ENCODE measurements at regions of chr5 and their contacts with region 1.

Region 1: DNA sequence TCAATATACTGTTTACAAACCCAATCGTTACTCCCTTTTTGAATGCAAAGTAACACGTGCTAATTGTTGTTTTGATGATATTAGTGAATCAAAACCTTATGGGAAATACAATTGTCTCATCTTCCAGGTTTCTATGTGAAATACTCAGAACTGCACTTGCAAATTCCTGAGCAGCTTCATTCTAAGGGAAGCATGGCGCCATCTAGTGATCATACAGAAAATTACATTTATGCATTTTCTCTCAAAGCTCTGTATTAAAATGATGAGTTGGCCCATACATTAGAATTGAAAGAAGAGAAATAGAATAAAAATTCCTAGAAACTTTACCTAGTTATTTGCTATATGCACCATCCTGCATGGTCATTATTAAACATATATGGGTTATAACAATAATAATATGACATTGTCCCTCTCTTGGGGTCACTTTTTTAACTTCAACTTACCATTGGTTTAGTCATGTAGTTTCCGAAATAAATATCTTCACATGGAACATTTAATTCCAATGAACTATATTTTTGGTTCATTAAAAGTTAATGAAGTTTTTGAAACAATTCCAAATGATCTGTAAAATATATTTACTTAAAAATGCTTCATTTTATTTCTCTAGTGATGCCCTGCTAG is 220.0 kb downstream of the PDE4D start:
- DNase-seq: peak in 2 of 5 donors; percentile 62 to 67
- H3K4me3 ChIP-seq: no peak overlapping the region
- H3K27ac ChIP-seq: no peak overlapping the region
- H3K4me1 ChIP-seq: no peaks in the 10 kb centered on the region
- H3K27me3 ChIP-seq: no peaks in the 10 kb centered on the region
- CTCF ChIP-seq: peak; percentile 67

Region 2: GRCh38 chr5:59188419-59189225 is 484.9 kb before region 1 on chr5:
- intact Hi-C with region 1: loop called (anchors 10 kb)
- DNase-seq: peak; percentile 70 to 88 (median 79)
- H3K4me3 ChIP-seq: peak overlapping the region in 1 of 3 donors; percentile 29
- H3K27ac ChIP-seq: no peak overlapping the region
- H3K4me1 ChIP-seq: no peaks in the 10 kb centered on the region
- H3K27me3 ChIP-seq: no peaks in the 10 kb centered on the region
- CTCF ChIP-seq: peak; percentile 79

Region 3: GRCh38 chr5:59624898-59625297 is 48.6 kb before region 1 on chr5:
- intact Hi-C with region 1: no loop called
- DNase-seq: no peak
- H3K4me3 ChIP-seq: no peak overlapping the region
- H3K27ac ChIP-seq: no peak overlapping the region
- H3K4me1 ChIP-seq: no peaks in the 10 kb centered on the region
- H3K27me3 ChIP-seq: no peaks in the 10 kb centered on the region
- CTCF ChIP-seq: no peak